Activated naive CD4-positive, alpha-beta T cell treated with anti-CD3 and anti-CD28 coated beads for 36 hours (primary cell): ENCODE measurements at regions of chr2 and their contacts with region 1.

Region 1: GRCh38 chr2:12127638-12128037 is 381.2 kb downstream of the LPIN1 start:
- DNase-seq: peak; percentile 37
- H3K4me3 Mint-ChIP-seq: no peak overlapping the region
- H3K27ac Mint-ChIP-seq: peak overlapping the region; percentile 74
- H3K4me1 Mint-ChIP-seq: peaks cover 2% of the 10 kb centered on the region
- H3K27me3 Mint-ChIP-seq: no peaks in the 10 kb centered on the region

Region 2: GRCh38 chr2:11610624-11611242 is 516.9 kb before region 1 on chr2:
- CTCF ChIA-PET with region 1: no interaction called
- intact Hi-C with region 1: no loop called
- DNase-seq: no peak
- H3K4me3 Mint-ChIP-seq: no peak overlapping the region
- H3K27ac Mint-ChIP-seq: no peak overlapping the region
- H3K4me1 Mint-ChIP-seq: no peaks in the 10 kb centered on the region
- H3K27me3 Mint-ChIP-seq: no peaks in the 10 kb centered on the region

Region 3: DNA sequence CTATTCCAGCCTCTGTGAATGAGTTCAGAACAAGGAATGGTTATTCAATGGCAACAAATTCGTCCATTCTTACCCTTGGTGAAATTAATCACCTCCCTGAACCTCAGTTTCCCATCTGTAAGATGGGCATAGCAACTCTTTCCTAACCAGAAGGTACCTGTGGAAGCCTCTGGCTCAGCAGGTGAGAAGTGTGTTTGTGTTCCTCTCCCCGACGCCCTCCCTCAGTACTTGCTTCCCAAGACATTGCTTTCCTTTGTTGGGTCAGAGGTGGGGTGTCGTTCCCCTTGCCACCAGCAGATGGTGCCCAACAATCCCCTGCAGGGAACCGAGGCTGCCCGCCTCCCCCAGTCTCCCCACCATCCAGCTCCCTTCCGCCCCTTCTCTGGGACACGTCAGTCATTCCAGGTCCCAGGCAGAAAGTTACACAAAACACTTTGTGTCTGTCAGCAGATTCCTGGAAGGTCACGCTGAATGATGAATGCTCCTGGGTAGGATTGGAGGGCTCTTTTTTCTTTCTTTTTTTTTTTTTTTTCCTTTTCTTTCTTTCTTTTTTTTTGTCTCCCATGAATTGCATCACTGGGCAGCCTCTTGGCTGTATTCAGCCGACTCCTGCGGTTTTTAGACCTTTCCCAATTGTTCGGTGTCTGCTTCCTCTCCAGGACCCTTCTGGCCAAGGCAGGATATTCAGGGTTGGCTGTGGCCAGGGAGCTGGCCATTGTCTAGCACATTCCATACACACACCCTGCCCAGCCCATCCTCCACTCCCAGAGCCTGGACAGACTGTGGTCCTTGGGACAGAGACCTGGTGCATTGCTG is 263.9 kb before region 1 on chr2:
- CTCF ChIA-PET with region 1: no interaction called
- intact Hi-C with region 1: loop called (anchors 2 kb)
- DNase-seq: peak; percentile 74
- H3K4me3 Mint-ChIP-seq: no peak overlapping the region
- H3K27ac Mint-ChIP-seq: no peak overlapping the region
- H3K4me1 Mint-ChIP-seq: peaks cover 22% of the 10 kb centered on the region
- H3K27me3 Mint-ChIP-seq: peaks cover 2% of the 10 kb centered on the region

Region 4: GRCh38 chr2:11920993-11921583 is 206.6 kb before region 1 on chr2:
- CTCF ChIA-PET with region 1: no interaction called
- intact Hi-C with region 1: no loop called
- DNase-seq: no peak
- H3K4me3 Mint-ChIP-seq: no peak overlapping the region
- H3K27ac Mint-ChIP-seq: no peak overlapping the region
- H3K4me1 Mint-ChIP-seq: peaks cover 6% of the 10 kb centered on the region
- H3K27me3 Mint-ChIP-seq: no peaks in the 10 kb centered on the region

Region 5: GRCh38 chr2:12005886-12006681 is 121.6 kb before region 1 on chr2:
- CTCF ChIA-PET with region 1: no interaction called
- intact Hi-C with region 1: loop called (anchors 5 kb)
- DNase-seq: peak; percentile 92
- H3K4me3 Mint-ChIP-seq: no peak overlapping the region
- H3K27ac Mint-ChIP-seq: no peak overlapping the region
- H3K4me1 Mint-ChIP-seq: peaks cover 22% of the 10 kb centered on the region
- H3K27me3 Mint-ChIP-seq: peaks cover 52% of the 10 kb centered on the region

Region 6: GRCh38 chr2:12097859-12098258 is 29.8 kb before region 1 on chr2:
- CTCF ChIA-PET with region 1: no interaction called
- intact Hi-C with region 1: no loop called
- DNase-seq: no peak
- H3K4me3 Mint-ChIP-seq: no peak overlapping the region
- H3K27ac Mint-ChIP-seq: no peak overlapping the region
- H3K4me1 Mint-ChIP-seq: no peaks in the 10 kb centered on the region
- H3K27me3 Mint-ChIP-seq: no peaks in the 10 kb centered on the region

Region 7: DNA sequence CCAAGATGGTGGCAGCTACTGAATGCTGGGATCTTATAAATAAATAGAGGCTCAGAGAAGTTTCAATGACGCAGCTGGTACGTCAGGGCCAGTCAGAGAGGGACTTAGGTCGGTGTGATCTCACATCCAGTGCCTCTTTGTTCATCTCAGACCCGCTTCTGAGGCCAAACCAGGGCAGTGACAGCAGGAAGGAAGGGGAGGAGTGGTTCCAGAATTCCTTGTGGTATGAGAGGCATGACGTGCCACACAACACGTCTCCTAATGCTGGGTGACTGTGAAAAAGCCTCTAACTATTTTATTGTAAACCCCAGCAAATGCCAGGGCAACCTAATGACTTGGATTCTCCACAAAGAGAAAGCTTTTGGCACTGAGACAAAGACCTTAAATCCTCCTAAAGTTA is 42.1 kb after region 1 on chr2:
- CTCF ChIA-PET with region 1: no interaction called
- intact Hi-C with region 1: loop called (anchors 2 kb)
- DNase-seq: peak; percentile 69
- H3K4me3 Mint-ChIP-seq: no peak overlapping the region
- H3K27ac Mint-ChIP-seq: no peak overlapping the region
- H3K4me1 Mint-ChIP-seq: peaks cover 42% of the 10 kb centered on the region
- H3K27me3 Mint-ChIP-seq: no peaks in the 10 kb centered on the region

Region 8: GRCh38 chr2:12293874-12294273 is 166.2 kb after region 1 on chr2:
- CTCF ChIA-PET with region 1: no interaction called
- intact Hi-C with region 1: loop called (anchors 1 kb)
- DNase-seq: peak; percentile 18
- H3K4me3 Mint-ChIP-seq: no peak overlapping the region
- H3K27ac Mint-ChIP-seq: peak overlapping the region; percentile 75
- H3K4me1 Mint-ChIP-seq: peaks cover 55% of the 10 kb centered on the region
- H3K27me3 Mint-ChIP-seq: peaks cover 6% of the 10 kb centered on the region